ENCODE measurements at regions of chr12 and their contacts with region 1.

Region 1: GRCh38 chr12:115451780-115452736 is 768.1 kb upstream of the TBX3 start:
- DNase-seq: peak; percentile 88
- H3K4me3 ChIP-seq: peak overlapping the region; percentile 47 to 59
- H3K27ac ChIP-seq: peak overlapping the region in 1 of 2 experiments; percentile 79; a peak in 2 of 4 replicates
- H3K4me1 ChIP-seq: peaks cover 5 to 44% of the 10 kb centered on the region in 2 experiments; a peak in 2 of 4 replicates
- H3K27me3 ChIP-seq: no peaks in the 10 kb centered on the region
- CTCF ChIP-seq: no peak
- EP300 ChIP-seq: peak in 1 of 2 experiments; percentile 64; a peak in 2 of 4 replicates
- RAD21 ChIP-seq: 0 out of 2 replicates have a peak, but pooled peaks have one; percentile 1

Region 2: GRCh38 chr12:114668151-114668885 is 783.7 kb before region 1 on chr12:
- CTCF ChIA-PET with region 1: interaction called, 14 read pairs
- POLR2A ChIA-PET with region 1: interaction called, 7 read pairs
- DNase-seq: peak; percentile 92
- H3K4me3 ChIP-seq: peak overlapping the region; percentile 59 to 77
- H3K27ac ChIP-seq: peak overlapping the region in 1 of 2 experiments; percentile 89; a peak in 3 of 4 replicates
- H3K4me1 ChIP-seq: peaks cover 0 to 27% of the 10 kb centered on the region in 2 experiments; a peak in 2 of 4 replicates
- H3K27me3 ChIP-seq: no peaks in the 10 kb centered on the region
- CTCF ChIP-seq: peak; percentile 62
- EP300 ChIP-seq: no peak
- RAD21 ChIP-seq: peak; percentile 86

Region 3: GRCh38 chr12:115174920-115175319 is 277.1 kb before region 1 on chr12:
- CTCF ChIA-PET with region 1: no interaction called
- POLR2A ChIA-PET with region 1: interaction called, 13 read pairs
- DNase-seq: peak; percentile 76
- H3K4me3 ChIP-seq: no peak overlapping the region
- H3K27ac ChIP-seq: peak overlapping the region in 1 of 2 experiments; percentile 98; a peak in 3 of 4 replicates
- H3K4me1 ChIP-seq: peaks cover 0 to 22% of the 10 kb centered on the region in 2 experiments; a peak in 2 of 4 replicates
- H3K27me3 ChIP-seq: no peaks in the 10 kb centered on the region
- CTCF ChIP-seq: no peak
- EP300 ChIP-seq: peak in 1 of 2 experiments; percentile 96; a peak in 2 of 4 replicates
- RAD21 ChIP-seq: peak; percentile 53

Region 4: GRCh38 chr12:115423546-115423987 is 28.5 kb before region 1 on chr12:
- CTCF ChIA-PET with region 1: no interaction called
- POLR2A ChIA-PET with region 1: no interaction called
- DNase-seq: no peak
- H3K4me3 ChIP-seq: no peak overlapping the region
- H3K27ac ChIP-seq: no peak overlapping the region
- H3K4me1 ChIP-seq: no peaks in the 10 kb centered on the region
- H3K27me3 ChIP-seq: no peaks in the 10 kb centered on the region
- CTCF ChIP-seq: no peak
- EP300 ChIP-seq: no peak
- RAD21 ChIP-seq: no peak

Region 5: GRCh38 chr12:115440438-115440837 is 11.6 kb before region 1 on chr12:
- CTCF ChIA-PET with region 1: no interaction called
- POLR2A ChIA-PET with region 1: no interaction called
- DNase-seq: no peak
- H3K4me3 ChIP-seq: no peak overlapping the region
- H3K27ac ChIP-seq: 0 out of 4 replicates have a peak overlapping the region, but pooled peaks of 1 of the 2 experiments have one; percentile 12
- H3K4me1 ChIP-seq: no peaks in the 10 kb centered on the region; a peak in 1 of 4 replicates
- H3K27me3 ChIP-seq: no peaks in the 10 kb centered on the region
- CTCF ChIP-seq: no peak
- EP300 ChIP-seq: no peak; a peak in 1 of 4 replicates
- RAD21 ChIP-seq: no peak

Region 6: DNA sequence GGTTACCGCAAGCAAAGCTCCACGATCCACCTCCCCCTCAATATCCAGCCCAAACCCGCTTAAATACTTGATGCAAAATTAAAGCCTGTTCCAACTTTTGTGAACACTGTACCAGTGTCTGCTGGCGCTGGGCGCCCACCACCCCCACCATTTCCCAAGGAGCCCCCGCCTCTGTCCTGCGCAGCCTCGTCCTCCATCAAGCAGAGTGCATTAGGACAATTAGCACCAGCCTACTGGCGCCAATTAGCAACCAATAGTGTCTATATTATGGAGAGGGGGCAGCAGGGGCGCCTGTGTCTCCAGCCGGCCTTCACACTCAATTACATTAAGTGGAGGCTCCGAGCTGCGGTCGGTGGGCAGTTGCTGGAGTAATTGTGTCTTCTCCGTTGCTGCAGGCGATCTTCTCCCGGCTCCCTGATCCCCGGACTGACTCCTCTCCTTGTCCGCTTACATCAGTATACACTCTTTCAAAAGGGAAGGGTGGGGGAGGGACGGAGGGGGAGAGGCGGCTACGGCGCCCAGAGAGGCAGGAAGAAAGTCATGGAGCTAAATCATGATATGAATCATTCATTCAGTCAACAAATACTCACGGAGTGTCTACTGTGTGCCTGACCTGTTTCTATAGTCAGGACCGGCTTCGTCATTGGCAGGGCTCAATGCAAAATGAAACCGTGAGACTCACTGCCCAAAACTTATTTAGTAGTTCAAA is 118.2 kb after region 1 on chr12:
- CTCF ChIA-PET with region 1: interaction called, 12 read pairs
- POLR2A ChIA-PET with region 1: interaction called, 9 read pairs
- DNase-seq: peak; percentile 72
- H3K4me3 ChIP-seq: peak overlapping the region; percentile 48 to 54
- H3K27ac ChIP-seq: peak overlapping the region in 1 of 2 experiments; percentile 87; a peak in 2 of 4 replicates
- H3K4me1 ChIP-seq: peaks cover 0 to 7% of the 10 kb centered on the region in 2 experiments; a peak in 2 of 4 replicates
- H3K27me3 ChIP-seq: no peaks in the 10 kb centered on the region
- CTCF ChIP-seq: no peak
- EP300 ChIP-seq: peak; percentile 13 to 44; a peak in 3 of 4 replicates
- RAD21 ChIP-seq: 0 out of 2 replicates have a peak, but pooled peaks have one; percentile 8

Region 7: DNA sequence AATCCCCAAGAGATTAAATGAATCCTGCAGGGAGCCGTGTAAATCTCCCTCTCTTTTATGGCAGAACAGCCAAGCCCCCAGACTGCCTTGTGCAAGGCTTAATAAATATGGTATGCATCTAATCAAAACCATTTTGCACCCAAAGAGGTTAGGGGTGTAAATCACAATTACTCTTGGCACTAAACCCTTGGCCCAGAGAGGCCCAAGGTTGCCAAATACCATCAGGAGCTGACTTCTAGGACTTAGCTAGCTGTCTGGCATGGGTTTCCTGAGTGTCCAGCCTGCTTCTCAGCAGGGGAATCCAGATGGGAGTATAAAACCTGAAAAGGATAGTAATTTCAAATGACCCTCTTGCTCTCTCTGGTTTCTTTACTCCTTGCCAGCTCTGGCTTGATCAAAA is 215.1 kb after region 1 on chr12:
- CTCF ChIA-PET with region 1: no interaction called
- POLR2A ChIA-PET with region 1: no interaction called
- DNase-seq: no peak
- H3K4me3 ChIP-seq: no peak overlapping the region
- H3K27ac ChIP-seq: no peak overlapping the region
- H3K4me1 ChIP-seq: no peaks in the 10 kb centered on the region
- H3K27me3 ChIP-seq: no peaks in the 10 kb centered on the region
- CTCF ChIP-seq: no peak
- EP300 ChIP-seq: no peak
- RAD21 ChIP-seq: no peak